Activated CD4-positive, alpha-beta memory T cell treated with anti-CD3 and anti-CD28 coated beads, Interleukin-2, amount 10 ng/mL, durations not matched to agents 7 days and 5 days (primary cell): ENCODE measurements at regions of chr12 and their contacts with region 1.

Region 1: GRCh38 chr12:132489602-132490239 is at the start of gene FBRSL1:
- DNase-seq: peak; percentile 95
- H3K4me3 Mint-ChIP-seq: peak within 1 kb of the TSS; percentile 87
- H3K27ac Mint-ChIP-seq: peak within 1 kb of the TSS; percentile 98
- H3K4me1 Mint-ChIP-seq: peaks cover 46% of the 10 kb centered on the region
- H3K27me3 Mint-ChIP-seq: no peaks in the 10 kb centered on the region
- total RNA-seq, gene FBRSL1: 36.7 to 47.0 TPM

Region 2: GRCh38 chr12:132475304-132476037 is 14.2 kb before region 1 on chr12:
- CTCF ChIA-PET with region 1: no interaction called
- POLR2A ChIA-PET with region 1: interaction called, 30 read pairs
- DNase-seq: peak; percentile 53
- H3K4me3 Mint-ChIP-seq: peak overlapping the region; percentile 58
- H3K27ac Mint-ChIP-seq: peak overlapping the region; percentile 73
- H3K4me1 Mint-ChIP-seq: peaks cover 35% of the 10 kb centered on the region
- H3K27me3 Mint-ChIP-seq: peaks cover 6% of the 10 kb centered on the region

Region 3: GRCh38 chr12:132529906-132530305 is 40.2 kb after region 1 on chr12:
- CTCF ChIA-PET with region 1: no interaction called
- POLR2A ChIA-PET with region 1: no interaction called
- DNase-seq: no peak
- H3K4me3 Mint-ChIP-seq: no peak overlapping the region
- H3K27ac Mint-ChIP-seq: no peak overlapping the region
- H3K4me1 Mint-ChIP-seq: no peaks in the 10 kb centered on the region
- H3K27me3 Mint-ChIP-seq: no peaks in the 10 kb centered on the region